BJ (cell line): ENCODE measurements at regions of chr3 and their contacts with region 1.

Region 1: GRCh38 chr3:151611419-151611818 is 122.3 kb upstream of the AADACL2 start:
- DNase-seq: no peak
- H3K4me3 ChIP-seq: no peak overlapping the region
- H3K27me3 ChIP-seq: no peaks in the 10 kb centered on the region
- CTCF ChIP-seq: no peak

Region 2: GRCh38 chr3:151191095-151191494 is 420.3 kb before region 1 on chr3:
- CTCF ChIA-PET with region 1: no interaction called
- POLR2A ChIA-PET with region 1: interaction called, 11 read pairs
- DNase-seq: no peak
- H3K4me3 ChIP-seq: no peak overlapping the region
- H3K27me3 ChIP-seq: no peaks in the 10 kb centered on the region
- CTCF ChIP-seq: no peak

Region 3: GRCh38 chr3:151501923-151502632 is 109.3 kb before region 1 on chr3:
- CTCF ChIA-PET with region 1: no interaction called
- POLR2A ChIA-PET with region 1: no interaction called
- DNase-seq: no peak
- H3K4me3 ChIP-seq: no peak overlapping the region
- H3K27me3 ChIP-seq: no peaks in the 10 kb centered on the region
- CTCF ChIP-seq: no peak

Region 4: GRCh38 chr3:152213203-152213602 is 601.8 kb after region 1 on chr3:
- CTCF ChIA-PET with region 1: no interaction called
- POLR2A ChIA-PET with region 1: no interaction called
- DNase-seq: no peak
- H3K4me3 ChIP-seq: no peak overlapping the region
- H3K27me3 ChIP-seq: no peaks in the 10 kb centered on the region
- CTCF ChIP-seq: no peak